Activated T-helper 1 cell treated with anti-CD3 and anti-CD28 coated beads, Interleukin-12 subunit alpha, Interleukin-12 subunit beta, Interleukin-2, Interleukin-4 antibody, amounts not matched to agents 30 ng/mL and 10 ng/mL and 1 ng/mL, durations not matched to agents 14 hours and 24 hours and 36 hours (primary cell): ENCODE measurements at regions of chr11 and their contacts with region 1.

Region 1: DNA sequence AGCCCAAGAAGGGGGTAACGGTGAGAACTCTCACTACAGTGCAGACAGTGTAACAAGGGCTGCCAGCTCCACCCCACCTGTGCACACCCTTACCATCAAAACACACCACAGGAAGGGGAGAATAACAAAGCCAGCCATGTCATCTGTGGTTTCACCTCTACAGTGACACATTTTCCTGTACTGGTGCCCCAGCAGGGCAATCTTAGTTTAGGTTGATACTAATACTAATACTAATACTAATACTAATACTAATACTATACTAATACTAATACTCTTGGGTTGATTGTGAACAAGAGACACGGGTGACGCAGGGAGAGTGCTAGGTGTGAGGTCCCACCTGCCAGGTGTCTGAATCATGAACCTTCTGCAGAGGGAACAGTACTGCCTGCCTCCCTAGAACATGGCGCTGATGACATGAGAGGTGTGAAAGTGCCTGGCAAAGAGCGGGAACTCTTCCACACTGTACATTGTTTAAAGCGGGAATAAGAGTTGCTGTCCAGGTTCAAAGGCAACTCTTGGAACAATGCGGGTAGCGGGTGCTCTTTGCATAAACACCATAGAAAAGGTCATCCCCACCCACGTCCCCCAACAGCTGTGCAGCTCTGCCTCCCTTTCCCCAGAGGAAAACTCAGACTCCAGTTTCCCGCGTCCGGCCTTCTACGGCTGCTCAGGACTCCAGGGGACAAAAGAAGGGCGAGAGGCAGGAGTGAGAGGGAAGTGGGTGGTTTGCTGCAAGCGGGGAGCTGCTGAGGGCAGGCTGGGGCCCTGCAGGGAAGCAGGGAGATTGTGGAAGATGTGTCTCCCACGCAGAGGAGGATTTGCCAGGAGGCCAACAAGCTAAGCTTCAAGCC is 25.0 kb upstream of the TMPRSS4 start:
- DNase-seq: peak; percentile 57
- H3K4me3 Mint-ChIP-seq: peak overlapping the region; percentile 69
- H3K27ac Mint-ChIP-seq: peak overlapping the region; percentile 93
- H3K4me1 Mint-ChIP-seq: peaks cover 64% of the 10 kb centered on the region
- H3K27me3 Mint-ChIP-seq: peaks cover 3% of the 10 kb centered on the region

Region 2: DNA sequence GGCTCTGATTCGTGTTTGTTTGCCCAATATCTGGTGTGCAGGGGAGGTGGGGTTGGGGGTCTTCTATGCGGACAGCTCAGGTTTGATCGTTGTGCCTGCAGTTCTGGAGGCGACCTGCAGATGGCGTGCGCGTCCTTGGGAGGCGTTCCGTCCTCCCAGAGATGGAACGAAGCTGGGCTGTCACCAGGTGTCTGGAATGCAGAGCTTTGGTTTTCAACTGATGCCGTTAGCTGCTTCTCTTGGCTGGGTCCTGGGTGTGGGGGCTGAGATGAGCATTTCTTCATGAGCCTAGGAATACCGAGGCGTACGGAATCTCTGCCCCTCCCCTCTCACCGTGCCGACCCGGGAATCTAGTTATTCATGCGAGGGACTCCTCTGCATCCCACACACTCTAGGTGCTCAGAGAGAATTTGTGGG is 625.6 kb before region 1 on chr11:
- intact Hi-C with region 1: loop called (anchors 10 kb)
- DNase-seq: peak; percentile 44
- H3K4me3 Mint-ChIP-seq: no peak overlapping the region
- H3K27ac Mint-ChIP-seq: no peak overlapping the region
- H3K4me1 Mint-ChIP-seq: no peaks in the 10 kb centered on the region
- H3K27me3 Mint-ChIP-seq: peaks cover 3% of the 10 kb centered on the region

Region 3: DNA sequence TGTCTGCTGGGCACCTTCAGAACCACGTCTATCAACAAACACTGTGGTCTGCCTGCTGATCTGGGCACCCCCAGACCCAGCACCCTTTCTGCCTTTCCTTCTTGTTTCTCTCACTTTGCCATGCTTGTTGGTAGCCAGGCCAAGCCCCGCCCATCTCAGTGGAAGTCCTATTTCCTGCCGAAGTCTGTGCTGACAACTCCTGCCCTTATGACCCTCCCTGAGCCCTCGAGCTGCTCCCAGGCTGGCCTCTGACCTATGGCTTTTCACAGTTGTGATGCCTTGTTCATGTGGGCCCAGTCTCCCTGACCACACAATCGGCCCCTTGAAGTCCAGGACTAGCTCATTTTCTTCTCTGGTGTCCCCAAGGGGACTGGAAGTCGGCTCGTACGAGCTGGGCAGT is 386.9 kb before region 1 on chr11:
- intact Hi-C with region 1: no loop called
- DNase-seq: no peak
- H3K4me3 Mint-ChIP-seq: no peak overlapping the region
- H3K27ac Mint-ChIP-seq: no peak overlapping the region
- H3K4me1 Mint-ChIP-seq: no peaks in the 10 kb centered on the region
- H3K27me3 Mint-ChIP-seq: no peaks in the 10 kb centered on the region

Region 4: DNA sequence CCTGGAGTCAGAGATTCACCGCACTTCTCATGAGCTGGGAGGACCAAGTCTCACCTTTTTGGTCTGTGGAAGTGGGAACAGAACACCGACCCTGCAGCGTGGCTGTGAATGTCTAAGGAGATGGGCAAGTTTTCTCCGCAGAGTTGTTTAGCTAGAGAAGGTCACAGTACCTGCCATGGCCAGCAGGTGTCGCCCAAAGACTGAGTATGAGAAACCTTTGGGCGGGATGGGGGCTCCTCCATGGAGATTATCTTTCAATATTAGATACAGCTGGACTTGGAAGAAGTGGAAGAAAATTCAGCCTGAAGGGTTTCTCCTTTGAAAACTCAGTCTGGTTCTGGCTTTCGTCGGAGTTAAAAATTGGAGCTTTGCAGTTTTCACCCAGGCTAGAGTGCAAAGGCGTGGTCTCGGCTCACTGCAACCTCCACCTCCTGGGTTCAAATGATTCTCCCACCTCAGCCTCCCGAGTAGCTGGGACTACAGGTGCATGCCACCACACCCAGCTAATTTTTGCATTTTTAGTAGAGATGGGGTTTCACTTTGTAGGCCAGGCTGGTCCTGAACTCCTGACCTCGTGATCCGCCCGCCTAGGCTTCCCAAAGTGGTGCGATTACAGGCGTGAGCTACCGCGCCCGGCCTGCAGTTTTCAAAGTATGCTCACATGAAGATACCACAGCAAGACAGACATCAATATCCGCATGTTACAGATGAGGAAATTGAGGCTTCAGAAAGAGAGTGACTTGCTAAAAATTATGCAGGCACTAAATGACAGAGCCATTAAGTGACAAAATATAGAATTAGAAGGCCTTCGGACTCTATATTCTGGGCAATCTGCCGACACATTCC is 244.1 kb before region 1 on chr11:
- intact Hi-C with region 1: loop called (anchors 1 kb)
- DNase-seq: peak; percentile 53
- H3K4me3 Mint-ChIP-seq: no peak overlapping the region
- H3K27ac Mint-ChIP-seq: peak overlapping the region; percentile 30
- H3K4me1 Mint-ChIP-seq: peaks cover 33% of the 10 kb centered on the region
- H3K27me3 Mint-ChIP-seq: peaks cover 5% of the 10 kb centered on the region

Region 5: DNA sequence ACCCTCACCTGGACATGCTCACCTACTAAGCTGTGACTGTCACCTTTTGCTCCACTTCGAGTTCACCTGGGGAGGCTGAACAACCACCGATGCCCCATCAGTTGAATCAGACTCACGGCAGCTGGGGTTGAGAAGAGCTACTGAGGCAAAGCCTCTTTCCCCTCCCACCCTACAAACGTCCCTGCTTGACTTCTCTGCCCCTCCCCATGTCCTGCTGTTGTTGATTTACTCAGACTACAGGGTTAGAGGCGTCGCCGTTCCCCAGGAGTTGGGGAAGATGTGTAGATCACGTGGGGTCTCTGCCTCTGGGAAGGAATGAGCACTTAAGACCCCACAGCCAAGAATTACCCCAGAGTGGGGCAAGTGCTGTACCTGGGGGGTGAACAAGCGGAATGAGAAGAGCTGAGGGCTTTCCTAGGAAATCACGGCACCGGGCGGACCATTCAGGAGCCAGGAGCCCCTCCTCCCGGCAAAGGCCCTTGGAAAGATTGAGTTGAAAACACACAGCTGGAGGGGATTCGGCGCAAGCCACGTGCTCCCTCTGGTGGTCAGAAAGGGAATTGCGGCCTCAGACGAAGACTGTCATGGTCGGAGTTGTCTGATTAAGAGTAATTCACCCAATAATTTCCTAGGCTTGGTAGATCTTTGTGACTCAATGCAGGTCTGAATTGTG is 234.3 kb before region 1 on chr11:
- intact Hi-C with region 1: loop called (anchors 1 kb)
- DNase-seq: peak; percentile 83
- H3K4me3 Mint-ChIP-seq: peak overlapping the region; percentile 70
- H3K27ac Mint-ChIP-seq: peak overlapping the region; percentile 98
- H3K4me1 Mint-ChIP-seq: peaks cover 79% of the 10 kb centered on the region
- H3K27me3 Mint-ChIP-seq: no peaks in the 10 kb centered on the region

Region 6: DNA sequence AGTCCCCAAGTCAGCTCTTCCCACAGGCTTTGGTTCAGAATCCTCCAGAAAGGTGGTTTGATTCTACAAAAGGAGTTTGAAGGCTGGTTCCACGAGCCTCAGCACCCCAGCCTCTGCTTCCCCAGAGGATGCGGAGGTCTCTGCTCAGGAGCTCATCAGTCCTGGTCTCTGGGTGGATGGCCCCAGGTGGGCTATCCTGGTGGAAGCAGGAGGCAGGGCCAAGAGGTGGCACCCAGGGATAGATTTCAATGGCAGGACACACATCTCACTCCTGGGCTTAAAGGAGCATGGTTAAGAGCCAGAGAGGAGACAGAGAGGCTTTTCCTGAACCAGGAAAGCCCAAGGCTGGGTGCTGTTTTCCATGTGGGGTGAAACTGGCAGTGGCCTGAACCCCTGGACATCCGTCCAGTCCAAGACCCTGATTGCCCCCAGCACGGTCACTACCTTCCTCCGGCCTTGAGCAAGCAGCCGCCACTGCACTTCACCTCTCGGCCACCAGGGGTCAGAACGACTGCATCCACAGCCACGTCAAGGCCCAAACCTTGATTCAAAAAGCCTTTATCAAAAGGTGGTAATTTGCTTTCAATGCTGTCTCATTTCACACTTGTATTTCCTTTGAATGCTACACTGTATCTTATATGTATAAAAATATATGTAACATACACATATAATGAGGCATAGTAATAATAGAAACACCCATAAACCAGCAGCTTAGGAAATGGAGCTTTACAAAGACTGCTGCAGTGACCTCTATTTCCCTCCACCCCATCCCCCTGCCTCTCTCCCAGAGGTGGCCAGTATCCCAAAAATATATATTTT is 208.0 kb before region 1 on chr11:
- intact Hi-C with region 1: loop called (anchors 1 kb)
- DNase-seq: peak; percentile 63
- H3K4me3 Mint-ChIP-seq: no peak overlapping the region
- H3K27ac Mint-ChIP-seq: no peak overlapping the region
- H3K4me1 Mint-ChIP-seq: no peaks in the 10 kb centered on the region
- H3K27me3 Mint-ChIP-seq: peaks cover 17% of the 10 kb centered on the region

Region 7: GRCh38 chr11:118002541-118003423 is 49.1 kb before region 1 on chr11:
- intact Hi-C with region 1: loop called (anchors 1 kb)
- DNase-seq: peak; percentile 50
- H3K4me3 Mint-ChIP-seq: peak overlapping the region; percentile 61
- H3K27ac Mint-ChIP-seq: peak overlapping the region; percentile 98
- H3K4me1 Mint-ChIP-seq: peaks cover 92% of the 10 kb centered on the region
- H3K27me3 Mint-ChIP-seq: no peaks in the 10 kb centered on the region

Region 8: GRCh38 chr11:118068206-118068944 is 16.5 kb after region 1 on chr11:
- intact Hi-C with region 1: no loop called
- DNase-seq: no peak
- H3K4me3 Mint-ChIP-seq: no peak overlapping the region
- H3K27ac Mint-ChIP-seq: no peak overlapping the region
- H3K4me1 Mint-ChIP-seq: peaks cover 15% of the 10 kb centered on the region
- H3K27me3 Mint-ChIP-seq: peaks cover 12% of the 10 kb centered on the region